Prostate gland (tissue), 2 donors: ENCODE measurements at regions of chr7 and their contacts with region 1.

Region 1: DNA sequence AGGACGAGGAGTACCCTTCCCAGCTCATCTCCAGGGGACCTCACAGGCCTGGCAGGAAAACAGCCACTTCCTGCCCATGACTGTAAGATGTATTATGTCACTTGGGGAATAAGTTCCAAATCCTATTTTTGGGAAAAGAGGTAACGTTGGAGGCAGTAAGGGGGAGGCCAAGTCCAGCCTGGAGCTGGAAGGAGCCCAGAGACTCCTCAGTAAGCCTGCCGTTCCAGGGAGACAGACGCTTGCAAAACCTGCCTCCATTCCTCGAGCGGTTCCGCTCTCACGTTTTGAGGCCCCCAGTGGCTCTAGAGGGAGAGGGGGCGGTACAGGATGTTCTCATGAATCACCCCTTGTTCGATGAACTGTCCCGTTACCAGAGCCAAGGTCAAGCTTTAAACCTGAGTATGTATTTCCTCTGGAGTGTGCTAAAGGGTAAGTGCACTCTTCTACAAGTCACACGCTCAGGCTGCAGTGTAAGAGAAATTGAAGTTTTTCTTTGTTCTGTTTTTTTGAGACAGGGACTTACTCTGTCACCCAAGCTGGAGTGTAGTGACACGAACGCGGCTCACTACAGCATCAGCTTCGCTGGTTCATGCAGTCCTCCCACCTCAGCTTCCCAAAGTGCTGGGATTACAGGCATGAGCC is 45.5 kb upstream of the CYTH3 start:
- DNase-seq: no peak
- H3K4me3 ChIP-seq: no peak overlapping the region
- H3K27ac ChIP-seq: peak overlapping the region in 1 of 2 donors; percentile 14
- H3K4me1 ChIP-seq: no peaks in the 10 kb centered on the region
- H3K27me3 ChIP-seq: no peaks in the 10 kb centered on the region
- CTCF ChIP-seq: no peak
- POLR2A ChIP-seq: no peak

Region 2: GRCh38 chr7:5997222-5997808 is 320.6 kb before region 1 on chr7:
- intact Hi-C with region 1: loop called (anchors 5 kb)
- DNase-seq: peak; percentile 62
- H3K4me3 ChIP-seq: no peak overlapping the region
- H3K27ac ChIP-seq: peak overlapping the region in 1 of 2 donors; percentile 30
- H3K4me1 ChIP-seq: no peaks in the 10 kb centered on the region
- H3K27me3 ChIP-seq: no peaks in the 10 kb centered on the region
- CTCF ChIP-seq: peak; percentile 14 to 80 (median 66)
- POLR2A ChIP-seq: no peak

Region 3: GRCh38 chr7:6272481-6273323 is 45.2 kb before region 1 on chr7 and contains the start of gene CYTH3:
- intact Hi-C with region 1: loop called (anchors 5 kb)
- DNase-seq: peak; percentile 76
- H3K4me3 ChIP-seq: peak within 1 kb of the TSS; percentile 74 to 89
- H3K27ac ChIP-seq: peak within 1 kb of the TSS; percentile 45 to 58
- H3K4me1 ChIP-seq: peaks cover 15% of the 10 kb centered on the region
- H3K27me3 ChIP-seq: no peaks in the 10 kb centered on the region
- CTCF ChIP-seq: no peak
- POLR2A ChIP-seq: no peak
- total RNA-seq, gene CYTH3: 12.3 to 37.7 TPM

Region 4: GRCh38 chr7:6283391-6284390 is 34.2 kb before region 1 on chr7:
- intact Hi-C with region 1: no loop called
- DNase-seq: no peak
- H3K4me3 ChIP-seq: no peak overlapping the region
- H3K27ac ChIP-seq: no peak overlapping the region
- H3K4me1 ChIP-seq: no peaks in the 10 kb centered on the region
- H3K27me3 ChIP-seq: no peaks in the 10 kb centered on the region
- CTCF ChIP-seq: no peak
- POLR2A ChIP-seq: no peak

Region 5: DNA sequence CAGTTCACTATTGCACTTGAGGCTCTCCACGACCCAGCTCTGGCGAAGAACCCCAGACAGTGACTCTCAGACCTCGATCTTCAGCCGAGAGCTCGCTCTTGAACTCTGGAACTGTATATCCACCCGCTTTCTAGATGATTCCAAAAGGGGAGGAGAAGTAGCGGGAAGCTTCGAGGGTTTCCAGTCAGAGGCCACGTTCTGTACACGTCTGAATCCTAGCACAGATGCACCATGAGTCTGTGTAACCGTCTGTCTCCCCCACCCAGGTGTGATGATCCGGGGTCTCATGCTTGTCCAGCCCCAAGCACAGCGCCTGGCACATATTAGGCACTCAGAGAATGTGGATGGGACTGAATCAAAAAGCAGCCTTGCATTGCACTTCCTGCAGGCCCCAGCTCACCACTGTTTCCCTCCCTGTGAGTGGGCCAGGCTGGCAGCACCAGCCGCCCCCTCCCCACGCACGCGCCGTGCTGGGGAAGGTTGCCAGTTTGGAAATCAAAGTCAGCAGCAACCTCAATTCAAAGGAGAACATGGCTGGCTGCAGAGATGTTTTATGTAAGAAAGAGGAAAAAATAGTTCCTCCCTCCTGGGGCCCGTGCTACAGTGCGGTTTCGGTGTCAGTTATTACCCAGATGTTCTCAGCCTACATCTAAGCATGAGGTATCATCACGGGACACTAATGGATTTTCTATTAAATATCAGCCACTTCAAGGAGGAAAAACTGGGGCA is 227.6 kb after region 1 on chr7:
- intact Hi-C with region 1: no loop called
- DNase-seq: no peak
- H3K4me3 ChIP-seq: no peak overlapping the region
- H3K27ac ChIP-seq: no peak overlapping the region
- H3K4me1 ChIP-seq: no peaks in the 10 kb centered on the region
- H3K27me3 ChIP-seq: no peaks in the 10 kb centered on the region
- CTCF ChIP-seq: no peak
- POLR2A ChIP-seq: no peak